Endothelial cell of umbilical vein (primary cell): ENCODE measurements at regions of chr12 and their contacts with region 1.

Region 1: DNA sequence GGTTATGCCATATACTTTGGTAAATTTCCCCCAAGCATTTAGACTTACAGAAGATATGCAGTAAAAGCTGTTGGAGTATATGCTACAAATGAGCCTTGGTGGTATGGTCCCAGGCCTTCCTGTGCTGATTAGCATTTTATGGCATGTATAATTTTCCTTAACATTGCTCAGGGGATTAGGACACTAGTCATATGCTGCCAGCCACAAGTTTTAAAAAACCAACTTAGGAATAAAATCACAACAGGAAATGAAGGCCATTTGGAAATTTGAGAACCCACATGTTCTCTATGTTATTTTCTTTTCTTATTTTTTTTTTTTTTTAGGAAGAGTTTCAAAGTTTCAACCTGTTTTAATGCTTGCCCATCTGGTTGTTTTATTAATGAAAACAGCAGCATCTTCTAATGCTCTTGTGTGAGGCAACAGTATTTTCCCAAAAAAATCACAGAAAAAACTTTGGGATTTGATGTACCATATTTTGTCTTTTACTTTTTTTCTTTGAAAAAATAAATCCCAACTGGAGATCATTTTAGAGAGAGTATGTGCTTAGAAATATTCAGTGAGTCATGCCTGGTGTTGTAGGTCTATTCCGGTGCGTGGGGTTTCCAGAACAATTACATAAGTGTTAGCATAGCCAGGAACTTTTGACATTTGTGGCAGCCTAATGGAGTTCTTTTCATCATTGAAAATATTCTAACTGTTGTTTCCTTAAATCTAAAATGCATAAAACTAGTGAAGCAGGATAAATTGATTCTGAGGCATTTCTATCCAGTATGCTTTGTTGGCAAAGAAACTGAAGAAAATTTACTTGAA is 21.7 kb upstream of the DUSP6 start:
- DNase-seq: peak; percentile 90
- H3K4me3 ChIP-seq: no peak overlapping the region
- H3K27ac ChIP-seq: peak overlapping the region; percentile 90
- H3K4me1 ChIP-seq: peaks cover 78% of the 10 kb centered on the region
- H3K27me3 ChIP-seq: no peaks in the 10 kb centered on the region
- CTCF ChIP-seq: no peak
- POLR2A ChIP-seq: no peak

Region 2: GRCh38 chr12:88946372-88946997 is 427.5 kb before region 1 on chr12:
- CTCF ChIA-PET with region 1: interaction called, 3 read pairs
- POLR2A ChIA-PET with region 1: no interaction called
- dilution Hi-C with region 1: no loop called
- intact Hi-C with region 1: loop called (anchors 5 kb)
- DNase-seq: peak; percentile 89
- H3K4me3 ChIP-seq: no peak overlapping the region
- H3K27ac ChIP-seq: peak overlapping the region; percentile 92
- H3K4me1 ChIP-seq: peaks cover 42% of the 10 kb centered on the region
- H3K27me3 ChIP-seq: no peaks in the 10 kb centered on the region
- CTCF ChIP-seq: no peak
- POLR2A ChIP-seq: no peak

Region 3: DNA sequence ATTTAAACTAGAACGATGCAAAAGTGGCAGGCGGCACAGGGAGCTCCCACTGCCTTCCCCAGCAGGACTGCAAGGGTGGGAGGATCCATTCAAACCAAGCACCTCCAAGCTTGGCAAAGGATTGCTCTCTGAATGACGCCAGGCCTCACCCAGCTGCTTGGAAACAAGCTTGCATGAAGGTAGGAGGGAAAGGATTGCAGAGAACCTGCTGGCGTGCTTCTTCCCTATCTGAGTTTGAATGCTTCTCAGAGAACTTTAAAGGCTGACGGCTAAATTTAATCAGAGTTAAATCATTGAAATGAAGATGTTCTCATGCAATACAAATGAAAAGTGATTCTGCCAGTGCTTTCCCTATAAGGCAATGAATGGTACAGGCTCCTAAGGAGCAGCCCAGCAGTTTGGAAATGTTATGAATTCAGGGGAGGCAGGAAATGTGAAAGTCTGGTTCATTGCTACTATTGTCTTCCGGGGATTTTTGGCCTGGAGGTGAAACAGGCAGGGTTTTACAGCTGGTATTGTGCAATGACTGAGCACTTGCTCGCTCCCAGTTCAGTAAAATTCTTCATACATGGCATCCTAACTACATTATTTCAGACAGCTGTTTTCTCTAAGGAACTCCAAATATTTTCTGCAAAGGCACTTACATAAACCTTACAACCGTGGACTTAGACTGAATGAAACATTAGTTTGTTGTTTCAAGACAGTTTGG is 10.2 kb after region 1 on chr12:
- CTCF ChIA-PET with region 1: no interaction called
- POLR2A ChIA-PET with region 1: no interaction called
- dilution Hi-C with region 1: no loop called
- intact Hi-C with region 1: loop called (anchors 1 kb)
- DNase-seq: peak; percentile 55
- H3K4me3 ChIP-seq: no peak overlapping the region
- H3K27ac ChIP-seq: no peak overlapping the region
- H3K4me1 ChIP-seq: peaks cover 16% of the 10 kb centered on the region
- H3K27me3 ChIP-seq: no peaks in the 10 kb centered on the region
- CTCF ChIP-seq: no peak
- POLR2A ChIP-seq: no peak

Region 4: DNA sequence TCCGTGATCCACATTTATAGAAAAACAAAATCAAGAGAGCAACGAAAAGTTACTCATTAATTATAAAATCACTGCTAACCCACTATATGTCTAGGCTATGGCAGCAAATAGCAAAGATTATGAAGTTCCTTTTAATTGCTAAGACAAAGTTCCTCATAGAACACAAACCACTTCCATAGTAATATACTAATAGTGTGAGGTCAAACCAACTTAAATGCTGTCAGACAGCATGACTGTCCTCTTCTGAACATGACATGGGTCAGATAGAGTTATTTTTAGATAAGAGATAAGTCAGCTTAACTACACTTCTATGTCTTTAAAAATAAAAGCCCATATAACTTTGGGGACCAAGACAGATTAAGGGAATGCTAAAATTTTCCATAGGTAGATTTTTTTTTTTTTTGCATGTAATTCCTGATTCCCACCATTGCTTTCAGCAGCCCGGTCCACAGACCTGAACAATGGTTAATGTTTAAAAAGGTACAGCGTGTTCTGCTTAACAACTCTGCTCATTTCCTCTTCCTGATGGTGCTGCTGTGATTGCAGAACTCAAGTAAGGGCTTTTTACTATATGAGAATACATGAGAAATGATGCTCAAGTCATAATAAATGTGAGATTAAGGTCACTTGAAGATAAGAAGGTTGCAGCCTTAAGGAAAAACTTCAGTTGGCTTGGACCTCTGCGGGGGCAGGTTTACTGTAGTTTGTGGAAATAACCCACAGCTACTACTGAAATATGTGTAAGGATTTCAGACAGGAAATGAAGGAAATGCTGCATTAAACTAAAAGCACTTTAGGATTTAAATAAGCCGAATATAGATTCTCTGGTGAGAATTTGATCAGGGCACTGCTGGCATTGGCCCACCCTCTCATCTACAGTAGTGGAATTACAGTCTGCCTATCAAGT is 16.0 kb after region 1 on chr12:
- CTCF ChIA-PET with region 1: no interaction called
- POLR2A ChIA-PET with region 1: no interaction called
- dilution Hi-C with region 1: no loop called
- intact Hi-C with region 1: loop called (anchors 1 kb)
- DNase-seq: peak; percentile 89
- H3K4me3 ChIP-seq: peak overlapping the region in 1 of 3 experiments; percentile 6
- H3K27ac ChIP-seq: peak overlapping the region; percentile 80
- H3K4me1 ChIP-seq: peaks cover 33% of the 10 kb centered on the region
- H3K27me3 ChIP-seq: no peaks in the 10 kb centered on the region
- CTCF ChIP-seq: no peak
- POLR2A ChIP-seq: no peak

Region 5: GRCh38 chr12:89417246-89417977 is 43.4 kb after region 1 on chr12:
- CTCF ChIA-PET with region 1: no interaction called
- POLR2A ChIA-PET with region 1: no interaction called
- dilution Hi-C with region 1: no loop called
- intact Hi-C with region 1: no loop called
- DNase-seq: peak; percentile 27
- H3K4me3 ChIP-seq: peak overlapping the region in 1 of 3 experiments; percentile 14
- H3K27ac ChIP-seq: no peak overlapping the region
- H3K4me1 ChIP-seq: no peaks in the 10 kb centered on the region
- H3K27me3 ChIP-seq: no peaks in the 10 kb centered on the region
- CTCF ChIP-seq: no peak
- POLR2A ChIP-seq: no peak

Region 6: GRCh38 chr12:89451841-89452251 is 77.9 kb after region 1 on chr12:
- CTCF ChIA-PET with region 1: interaction called, 5 read pairs
- POLR2A ChIA-PET with region 1: interaction called, 4 read pairs
- dilution Hi-C with region 1: no loop called
- intact Hi-C with region 1: loop called (anchors 1 kb)
- DNase-seq: peak; percentile 74
- H3K4me3 ChIP-seq: no peak overlapping the region
- H3K27ac ChIP-seq: peak overlapping the region; percentile 65
- H3K4me1 ChIP-seq: peaks cover 53% of the 10 kb centered on the region
- H3K27me3 ChIP-seq: no peaks in the 10 kb centered on the region
- CTCF ChIP-seq: no peak
- POLR2A ChIP-seq: peak; percentile 15

Region 7: GRCh38 chr12:89494411-89495231 is 120.7 kb after region 1 on chr12:
- CTCF ChIA-PET with region 1: no interaction called
- POLR2A ChIA-PET with region 1: no interaction called
- dilution Hi-C with region 1: no loop called
- intact Hi-C with region 1: no loop called
- DNase-seq: no peak
- H3K4me3 ChIP-seq: no peak overlapping the region
- H3K27ac ChIP-seq: no peak overlapping the region
- H3K4me1 ChIP-seq: no peaks in the 10 kb centered on the region
- H3K27me3 ChIP-seq: no peaks in the 10 kb centered on the region
- CTCF ChIP-seq: no peak
- POLR2A ChIP-seq: no peak

Region 8: DNA sequence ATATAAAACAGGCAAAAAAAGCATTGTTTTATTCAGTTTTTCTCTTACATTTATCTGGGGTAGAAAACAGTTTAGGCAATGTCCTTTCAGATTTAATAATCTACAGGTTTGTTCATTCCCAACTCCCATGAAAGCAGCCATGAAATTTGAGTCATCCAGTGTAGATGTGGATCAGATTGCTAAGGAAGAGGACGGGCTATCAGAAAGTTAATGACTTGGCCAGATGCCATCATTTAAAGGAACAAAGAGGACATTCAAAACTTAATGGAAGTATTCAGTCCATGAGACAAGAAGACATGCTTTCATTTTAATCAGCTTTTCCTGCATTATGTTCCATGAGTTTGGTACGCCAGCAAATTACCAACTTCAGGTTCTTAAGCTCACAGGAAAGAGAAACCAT is 183.0 kb after region 1 on chr12:
- CTCF ChIA-PET with region 1: no interaction called
- POLR2A ChIA-PET with region 1: no interaction called
- dilution Hi-C with region 1: no loop called
- intact Hi-C with region 1: no loop called
- DNase-seq: peak; percentile 35
- H3K4me3 ChIP-seq: no peak overlapping the region
- H3K27ac ChIP-seq: no peak overlapping the region
- H3K4me1 ChIP-seq: peaks cover 2% of the 10 kb centered on the region
- H3K27me3 ChIP-seq: peaks cover 0 to 2% of the 10 kb centered on the region in 2 experiments
- CTCF ChIP-seq: no peak
- POLR2A ChIP-seq: no peak